ENCODE measurements at regions of chr15 and their contacts with region 1.

Region 1: GRCh38 chr15:55434989-55435825 is 26.9 kb downstream of the PIERCE2 start:
- DNase-seq: peak; percentile 26
- H3K4me3 ChIP-seq: no peak overlapping the region
- H3K27ac ChIP-seq: no peak overlapping the region
- H3K4me1 ChIP-seq: no peaks in the 10 kb centered on the region
- H3K27me3 ChIP-seq: no peaks in the 10 kb centered on the region
- CTCF ChIP-seq: peak; percentile 48

Region 2: DNA sequence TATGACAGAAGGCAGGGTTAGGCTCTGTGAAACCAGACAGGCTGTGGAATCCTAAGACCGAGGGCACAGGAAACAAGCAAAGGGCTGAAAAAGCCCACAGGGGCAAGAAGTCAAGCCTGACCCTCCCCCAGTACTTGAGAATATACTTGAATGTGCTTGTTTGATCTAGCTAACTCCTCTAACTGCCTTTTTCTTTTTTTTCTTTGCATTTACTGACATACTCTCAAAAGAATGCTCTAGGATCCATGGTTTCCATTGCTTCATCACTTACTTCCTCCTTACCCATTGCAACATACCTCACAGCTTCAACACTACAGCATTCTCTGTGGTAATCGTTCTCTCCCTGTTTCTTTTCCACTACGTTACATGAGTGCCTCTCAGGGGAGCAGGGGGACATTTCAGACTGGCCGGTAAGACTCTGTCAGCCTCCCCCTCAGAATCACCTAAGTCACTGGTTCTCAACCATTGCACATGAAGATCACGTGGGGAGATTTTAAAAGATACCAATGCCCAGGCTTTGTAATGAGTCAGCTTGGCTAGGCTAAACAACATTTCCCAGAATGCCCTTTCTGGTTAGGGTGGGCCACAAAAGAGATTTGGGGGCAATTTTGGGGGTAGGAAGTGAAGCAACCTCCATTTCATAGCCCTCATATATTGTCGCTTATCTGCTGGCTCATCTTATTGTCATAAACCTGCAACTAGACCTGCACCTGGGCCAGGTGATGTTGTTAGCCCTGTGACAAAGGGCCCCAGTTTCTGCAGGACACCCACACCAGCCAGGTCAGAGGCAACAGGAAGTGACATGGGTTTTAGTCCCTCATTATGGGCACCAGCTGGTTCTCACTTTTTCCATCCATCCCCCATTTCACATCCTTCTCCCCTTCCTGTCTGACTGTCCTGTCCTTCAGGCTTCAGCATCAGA is 213.9 kb before region 1 on chr15:
- intact Hi-C with region 1: loop called (anchors 5 kb)
- DNase-seq: no peak
- H3K4me3 ChIP-seq: no peak overlapping the region
- H3K27ac ChIP-seq: peak overlapping the region; percentile 47
- H3K4me1 ChIP-seq: no peaks in the 10 kb centered on the region
- H3K27me3 ChIP-seq: no peaks in the 10 kb centered on the region
- CTCF ChIP-seq: no peak

Region 3: GRCh38 chr15:55290528-55291057 is 144.6 kb before region 1 on chr15:
- intact Hi-C with region 1: loop called (anchors 10 kb)
- DNase-seq: peak; percentile 88
- H3K4me3 ChIP-seq: peak overlapping the region; percentile 69
- H3K27ac ChIP-seq: peak overlapping the region; percentile 82
- H3K4me1 ChIP-seq: no peaks in the 10 kb centered on the region
- H3K27me3 ChIP-seq: no peaks in the 10 kb centered on the region
- CTCF ChIP-seq: peak; percentile 88

Region 4: GRCh38 chr15:55846116-55846707 is 411.0 kb after region 1 on chr15:
- intact Hi-C with region 1: no loop called
- DNase-seq: peak; percentile 72
- H3K4me3 ChIP-seq: no peak overlapping the region
- H3K27ac ChIP-seq: no peak overlapping the region
- H3K4me1 ChIP-seq: no peaks in the 10 kb centered on the region
- H3K27me3 ChIP-seq: no peaks in the 10 kb centered on the region
- CTCF ChIP-seq: peak; percentile 80